ENCODE measurements at regions of chr3 and their contacts with region 1.

Region 1: GRCh38 chr3:106251160-106251887 is 382.5 kb upstream of the CBLB start:
- DNase-seq: no peak
- H3K4me3 ChIP-seq: no peak overlapping the region
- H3K27ac ChIP-seq: no peak overlapping the region
- H3K4me1 ChIP-seq: no peaks in the 10 kb centered on the region
- H3K27me3 ChIP-seq: no peaks in the 10 kb centered on the region
- CTCF ChIP-seq: no peak
- POLR2A ChIP-seq: no peak

Region 2: DNA sequence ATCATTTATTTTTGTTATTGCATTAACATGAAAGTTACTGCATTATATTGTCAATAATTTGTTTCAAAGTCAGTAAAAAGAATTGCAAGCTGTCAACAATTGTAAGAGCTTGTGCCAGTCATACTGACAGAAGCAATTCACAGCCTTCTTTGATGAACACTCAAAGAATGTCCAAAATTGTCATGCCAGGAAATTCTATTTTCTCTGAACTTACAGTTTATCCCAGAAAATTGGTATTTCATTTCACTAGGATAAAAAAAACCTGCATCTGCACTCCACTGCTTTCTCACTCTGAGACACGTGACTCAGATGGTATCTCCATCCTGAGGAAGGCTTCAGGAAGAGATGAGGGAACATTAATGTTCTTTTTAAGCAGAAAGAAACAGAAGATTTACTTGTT is 793.4 kb after region 1 on chr3:
- intact Hi-C with region 1: loop called (anchors 5 kb)
- DNase-seq: no peak
- H3K4me3 ChIP-seq: no peak overlapping the region
- H3K27ac ChIP-seq: no peak overlapping the region
- H3K4me1 ChIP-seq: no peaks in the 10 kb centered on the region
- H3K27me3 ChIP-seq: no peaks in the 10 kb centered on the region
- CTCF ChIP-seq: no peak
- POLR2A ChIP-seq: no peak

Measured in vagina (tissue), 2 donors.